ENCODE measurements at regions of chr11 and their contacts with region 1.

Region 1: GRCh38 chr11:64864473-64865285 is 13.7 kb downstream of the EHD1 start:
- DNase-seq: peak; percentile 89
- ATAC-seq: peak; percentile 61
- H3K4me3 Mint-ChIP-seq: peak overlapping the region; percentile 66
- H3K27ac Mint-ChIP-seq: peak overlapping the region; percentile 95
- H3K4me1 Mint-ChIP-seq: peaks cover 91% of the 10 kb centered on the region
- H3K27me3 Mint-ChIP-seq: no peaks in the 10 kb centered on the region
- CTCF ChIP-seq: no peak

Region 2: GRCh38 chr11:64887757-64888405 is 23.2 kb after region 1 on chr11:
- CTCF ChIA-PET with region 1: interaction called, 1,168 read pairs
- POLR2A ChIA-PET with region 1: interaction called, 768 read pairs
- intact Hi-C with region 1: no loop called
- DNase-seq: peak; percentile 86
- ATAC-seq: peak; percentile 86
- H3K4me3 Mint-ChIP-seq: peak overlapping the region; percentile 55
- H3K27ac Mint-ChIP-seq: peak overlapping the region; percentile 74
- H3K4me1 Mint-ChIP-seq: peaks cover 37% of the 10 kb centered on the region
- H3K27me3 Mint-ChIP-seq: no peaks in the 10 kb centered on the region
- CTCF ChIP-seq: peak; percentile 97

Measured in activated CD8-positive, alpha-beta T cell treated with anti-CD3 and anti-CD28 coated beads for 36 hours (primary cell).